ENCODE measurements at regions of chr13 and their contacts with region 1.

Region 1: GRCh38 chr13:25249001-25249543 is 38.2 kb downstream of the MTMR6 start:
- DNase-seq: no peak
- H3K4me3 ChIP-seq: no peak overlapping the region
- H3K27ac ChIP-seq: no peak overlapping the region
- H3K4me1 ChIP-seq: no peaks in the 10 kb centered on the region
- H3K27me3 ChIP-seq: no peaks in the 10 kb centered on the region
- CTCF ChIP-seq: peak in 1 of 3 donors; percentile 16
- POLR2A ChIP-seq: no peak

Region 2: GRCh38 chr13:23915308-23915707 is 1333.8 kb before region 1 on chr13:
- intact Hi-C with region 1: loop called (anchors 10 kb)
- DNase-seq: no peak
- H3K4me3 ChIP-seq: no peak overlapping the region
- H3K27ac ChIP-seq: no peak overlapping the region
- H3K4me1 ChIP-seq: no peaks in the 10 kb centered on the region
- H3K27me3 ChIP-seq: no peaks in the 10 kb centered on the region
- CTCF ChIP-seq: no peak
- POLR2A ChIP-seq: no peak

Region 3: DNA sequence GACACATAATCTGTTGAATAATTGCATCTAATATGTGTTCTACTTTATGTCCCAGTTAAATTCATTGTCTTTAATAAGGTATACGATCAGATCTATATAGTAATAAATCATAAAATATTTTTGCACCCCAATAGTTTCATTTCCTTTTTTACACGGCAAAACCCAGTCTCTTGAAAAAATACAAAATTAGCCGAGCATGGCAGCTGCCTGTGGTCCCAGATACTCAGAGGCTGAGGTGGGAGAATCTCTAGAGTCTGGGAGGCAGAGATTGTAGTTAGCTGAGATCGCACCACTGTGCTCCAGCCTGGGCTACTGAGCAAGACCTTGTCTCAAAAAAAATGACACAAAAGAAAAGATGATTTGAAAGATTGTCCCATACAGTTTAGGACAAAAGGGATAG is 684.2 kb before region 1 on chr13:
- intact Hi-C with region 1: loop called (anchors 10 kb)
- DNase-seq: no peak
- H3K4me3 ChIP-seq: no peak overlapping the region
- H3K27ac ChIP-seq: no peak overlapping the region
- H3K4me1 ChIP-seq: no peaks in the 10 kb centered on the region
- H3K27me3 ChIP-seq: no peaks in the 10 kb centered on the region
- CTCF ChIP-seq: no peak
- POLR2A ChIP-seq: no peak